SK-N-SH (cell line): ENCODE measurements at regions of chr12 and their contacts with region 1.

Region 1: DNA sequence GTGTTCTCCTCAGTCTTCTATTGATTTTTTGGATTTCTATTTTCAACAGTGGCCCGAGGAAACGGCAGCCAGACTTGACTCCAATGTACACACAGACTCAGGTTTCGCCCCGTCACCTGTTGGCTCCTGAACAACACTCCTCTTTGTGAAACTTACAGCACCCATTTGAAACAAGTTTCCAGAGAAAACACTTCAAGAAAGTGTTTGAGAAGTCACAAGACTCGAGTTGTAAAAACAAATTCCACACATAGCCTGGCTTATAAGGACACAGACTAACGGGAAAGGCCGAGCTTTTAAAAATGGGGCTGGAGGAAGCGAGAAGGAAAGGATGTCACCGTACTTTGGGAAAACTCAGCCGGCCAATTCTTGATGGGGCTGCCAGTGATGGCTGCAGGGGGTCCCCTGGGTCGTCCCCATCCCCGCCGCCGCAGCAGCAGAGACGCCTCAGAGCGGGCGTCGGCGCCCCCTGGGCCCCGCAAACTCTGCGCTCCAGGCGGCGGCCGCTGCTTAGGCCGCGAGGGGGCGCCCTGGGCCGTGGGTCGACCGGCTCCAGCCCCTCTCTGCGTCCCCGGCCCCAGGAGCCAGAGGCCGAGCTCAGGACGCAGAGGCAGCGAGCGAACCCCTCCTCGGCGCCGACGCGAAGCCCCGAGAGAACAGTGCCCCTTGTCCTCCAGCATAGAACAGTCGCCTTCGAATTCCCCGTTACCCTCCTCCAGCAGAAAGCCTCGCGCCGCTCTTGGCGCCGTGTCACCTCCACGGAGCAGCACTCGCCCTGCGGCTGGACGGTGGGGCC is 106.9 kb downstream of the PRICKLE1 start:
- DNase-seq: peak; percentile 96
- H3K4me3 ChIP-seq: peak overlapping the region; percentile 65 to 78
- H3K27ac ChIP-seq: peak overlapping the region in 1 of 2 experiments; percentile 82; a peak in 1 of 4 replicates
- H3K4me1 ChIP-seq: peaks cover 0 to 14% of the 10 kb centered on the region in 2 experiments; a peak in 2 of 4 replicates
- H3K27me3 ChIP-seq: peaks cover 13% of the 10 kb centered on the region; the same call in 1 of the 2 replicates
- CTCF ChIP-seq: peak; percentile 78
- EP300 ChIP-seq: no peak
- RAD21 ChIP-seq: peak; percentile 83

Region 2: DNA sequence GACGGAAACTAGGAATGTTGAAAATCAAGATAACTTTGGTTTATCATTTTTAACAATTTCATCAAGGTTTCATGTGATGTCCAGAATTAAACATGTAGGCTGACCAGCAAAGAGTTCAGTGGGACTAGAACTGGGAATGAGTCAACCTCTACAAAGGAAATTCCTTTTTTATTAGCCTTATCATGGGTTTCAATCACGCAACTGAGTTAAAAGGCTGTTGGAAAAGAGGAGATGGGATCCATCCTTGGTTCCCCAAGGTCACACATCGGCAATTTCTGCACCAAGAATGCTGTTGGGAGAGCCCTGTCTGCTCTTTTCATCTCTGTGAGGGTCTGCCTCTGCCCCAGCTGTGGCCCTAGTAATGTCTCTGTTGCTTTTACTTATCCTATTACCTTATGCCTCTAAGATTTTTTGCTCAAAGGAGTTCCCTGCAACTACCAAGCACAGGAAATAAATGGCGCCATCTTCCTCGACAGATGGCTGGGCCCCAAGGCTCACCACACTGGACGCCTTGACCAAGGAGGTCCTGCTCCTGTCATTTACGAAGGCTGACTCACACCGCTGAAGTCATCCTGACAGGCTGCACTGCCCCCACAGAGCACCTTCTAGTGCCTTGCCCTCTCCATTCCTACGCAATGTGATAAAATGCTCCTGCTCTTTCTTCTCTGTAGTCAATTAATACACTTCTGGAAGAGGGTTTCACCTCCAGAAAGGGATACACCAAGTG is 705.4 kb before region 1 on chr12:
- CTCF ChIA-PET with region 1: no interaction called
- POLR2A ChIA-PET with region 1: no interaction called
- DNase-seq: no peak
- H3K4me3 ChIP-seq: no peak overlapping the region
- H3K27ac ChIP-seq: no peak overlapping the region
- H3K4me1 ChIP-seq: peaks cover 0 to 2% of the 10 kb centered on the region in 2 experiments; a peak in 1 of 4 replicates
- H3K27me3 ChIP-seq: no peaks in the 10 kb centered on the region
- CTCF ChIP-seq: no peak
- EP300 ChIP-seq: no peak
- RAD21 ChIP-seq: no peak

Region 3: GRCh38 chr12:42372154-42372791 is 110.4 kb before region 1 on chr12:
- CTCF ChIA-PET with region 1: no interaction called
- POLR2A ChIA-PET with region 1: no interaction called
- DNase-seq: peak; percentile 54
- H3K4me3 ChIP-seq: no peak overlapping the region; a peak in 1 of 4 replicates
- H3K27ac ChIP-seq: no peak overlapping the region
- H3K4me1 ChIP-seq: no peaks in the 10 kb centered on the region
- H3K27me3 ChIP-seq: no peaks in the 10 kb centered on the region
- CTCF ChIP-seq: peak; percentile 76
- EP300 ChIP-seq: no peak
- RAD21 ChIP-seq: peak; percentile 87

Region 4: GRCh38 chr12:42498549-42499247 is 16.1 kb after region 1 on chr12:
- CTCF ChIA-PET with region 1: interaction called, 11 read pairs
- POLR2A ChIA-PET with region 1: no interaction called
- DNase-seq: no peak
- H3K4me3 ChIP-seq: no peak overlapping the region
- H3K27ac ChIP-seq: no peak overlapping the region
- H3K4me1 ChIP-seq: no peaks in the 10 kb centered on the region
- H3K27me3 ChIP-seq: no peaks in the 10 kb centered on the region
- CTCF ChIP-seq: no peak
- EP300 ChIP-seq: no peak
- RAD21 ChIP-seq: no peak

Region 5: DNA sequence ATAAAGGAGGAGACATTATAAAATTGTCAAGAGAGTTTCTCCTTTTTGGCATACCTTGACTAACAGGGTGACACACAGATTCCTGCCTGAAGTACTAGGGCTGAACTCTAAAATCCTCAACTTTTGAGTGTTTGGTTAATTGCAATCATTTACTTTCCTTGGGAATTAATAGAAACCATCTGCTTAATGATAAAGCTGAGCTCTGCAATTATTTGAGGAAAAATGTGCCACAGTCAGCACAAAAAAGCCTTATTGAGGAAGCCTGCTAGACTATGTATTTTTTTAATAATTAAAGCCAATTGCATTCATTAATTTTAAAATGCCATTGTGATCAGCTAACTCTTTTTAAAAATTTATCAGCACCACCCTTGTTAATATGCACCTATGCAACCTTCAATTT is 68.2 kb after region 1 on chr12:
- CTCF ChIA-PET with region 1: interaction called, 14 read pairs
- POLR2A ChIA-PET with region 1: no interaction called
- DNase-seq: no peak
- H3K4me3 ChIP-seq: no peak overlapping the region
- H3K27ac ChIP-seq: no peak overlapping the region
- H3K4me1 ChIP-seq: no peaks in the 10 kb centered on the region; a peak in 1 of 4 replicates
- H3K27me3 ChIP-seq: no peaks in the 10 kb centered on the region
- CTCF ChIP-seq: no peak
- EP300 ChIP-seq: no peak
- RAD21 ChIP-seq: no peak

Region 6: GRCh38 chr12:42584651-42585111 is 102.0 kb after region 1 on chr12:
- CTCF ChIA-PET with region 1: interaction called, 27 read pairs
- POLR2A ChIA-PET with region 1: interaction called, 3 read pairs
- DNase-seq: peak; percentile 24
- H3K4me3 ChIP-seq: no peak overlapping the region; a peak in 1 of 4 replicates
- H3K27ac ChIP-seq: peak overlapping the region in 1 of 2 experiments; percentile 50; a peak in 2 of 4 replicates
- H3K4me1 ChIP-seq: peaks cover 7 to 19% of the 10 kb centered on the region in 2 experiments; a peak in 3 of 4 replicates
- H3K27me3 ChIP-seq: peaks cover 22% of the 10 kb centered on the region
- CTCF ChIP-seq: no peak
- EP300 ChIP-seq: peak in 1 of 2 experiments; percentile 17; a peak in 1 of 4 replicates
- RAD21 ChIP-seq: no peak

Region 7: GRCh38 chr12:43287706-43288383 is 805.2 kb after region 1 on chr12:
- CTCF ChIA-PET with region 1: interaction called, 54 read pairs
- POLR2A ChIA-PET with region 1: interaction called, 3 read pairs
- DNase-seq: no peak
- H3K4me3 ChIP-seq: no peak overlapping the region
- H3K27ac ChIP-seq: no peak overlapping the region
- H3K4me1 ChIP-seq: peaks cover 0 to 7% of the 10 kb centered on the region in 2 experiments; a peak in 3 of 4 replicates
- H3K27me3 ChIP-seq: no peaks in the 10 kb centered on the region
- CTCF ChIP-seq: no peak
- EP300 ChIP-seq: no peak
- RAD21 ChIP-seq: no peak